Activated T-helper 1 cell treated with anti-CD3 and anti-CD28 coated beads, Interleukin-12 subunit alpha, Interleukin-12 subunit beta, Interleukin-2, Interleukin-4 antibody, amounts not matched to agents 30 ng/mL and 10 ng/mL and 1 ng/mL, durations not matched to agents 14 hours and 24 hours and 36 hours (primary cell): ENCODE measurements at regions of chr12 and their contacts with region 1.

Region 1: GRCh38 chr12:50542448-50542847 is 37.7 kb downstream of the DIP2B start:
- DNase-seq: no peak
- H3K4me3 Mint-ChIP-seq: no peak overlapping the region
- H3K27ac Mint-ChIP-seq: peak overlapping the region; percentile 84
- H3K4me1 Mint-ChIP-seq: peaks cover 28% of the 10 kb centered on the region
- H3K27me3 Mint-ChIP-seq: no peaks in the 10 kb centered on the region

Region 2: GRCh38 chr12:50246873-50247612 is 295.4 kb before region 1 on chr12:
- intact Hi-C with region 1: loop called (anchors 10 kb)
- DNase-seq: peak; percentile 2
- H3K4me3 Mint-ChIP-seq: peak overlapping the region; percentile 79
- H3K27ac Mint-ChIP-seq: peak overlapping the region; percentile 90
- H3K4me1 Mint-ChIP-seq: peaks cover 38% of the 10 kb centered on the region
- H3K27me3 Mint-ChIP-seq: peaks cover 1% of the 10 kb centered on the region

Region 3: GRCh38 chr12:50441773-50442172 is 100.7 kb before region 1 on chr12:
- intact Hi-C with region 1: no loop called
- DNase-seq: no peak
- H3K4me3 Mint-ChIP-seq: no peak overlapping the region
- H3K27ac Mint-ChIP-seq: no peak overlapping the region
- H3K4me1 Mint-ChIP-seq: peaks cover 15% of the 10 kb centered on the region
- H3K27me3 Mint-ChIP-seq: no peaks in the 10 kb centered on the region

Region 4: DNA sequence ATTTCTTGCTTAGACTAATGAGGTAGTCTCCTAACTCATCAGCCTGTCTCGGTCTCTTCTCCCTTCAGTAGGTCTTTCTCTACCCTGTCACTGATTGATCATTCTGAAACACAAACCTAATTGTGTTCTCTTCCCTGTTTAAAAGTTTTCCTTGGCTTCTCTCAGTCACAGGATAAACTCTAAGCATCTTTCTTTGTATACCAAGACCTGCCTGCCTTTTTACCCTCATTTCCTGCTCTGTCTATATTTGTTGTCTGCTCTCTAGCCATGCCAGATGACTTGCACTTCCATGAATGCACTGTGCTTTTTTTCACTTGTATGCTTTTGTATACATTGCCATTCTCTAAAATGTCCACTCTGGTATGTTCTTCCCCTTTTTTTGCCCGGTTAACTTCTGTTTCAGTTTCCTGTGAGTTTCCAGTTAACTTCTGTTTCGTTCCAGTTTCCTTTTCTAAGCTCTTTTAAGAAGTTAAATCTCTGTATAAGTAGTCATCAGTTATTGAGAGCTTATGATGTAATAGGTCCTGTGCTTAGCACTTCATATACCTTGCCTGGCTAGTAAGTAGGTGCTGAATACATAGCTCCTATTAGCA is 24.9 kb before region 1 on chr12:
- intact Hi-C with region 1: loop called (anchors 1 kb)
- DNase-seq: no peak
- H3K4me3 Mint-ChIP-seq: no peak overlapping the region
- H3K27ac Mint-ChIP-seq: no peak overlapping the region
- H3K4me1 Mint-ChIP-seq: peaks cover 31% of the 10 kb centered on the region
- H3K27me3 Mint-ChIP-seq: no peaks in the 10 kb centered on the region

Region 5: DNA sequence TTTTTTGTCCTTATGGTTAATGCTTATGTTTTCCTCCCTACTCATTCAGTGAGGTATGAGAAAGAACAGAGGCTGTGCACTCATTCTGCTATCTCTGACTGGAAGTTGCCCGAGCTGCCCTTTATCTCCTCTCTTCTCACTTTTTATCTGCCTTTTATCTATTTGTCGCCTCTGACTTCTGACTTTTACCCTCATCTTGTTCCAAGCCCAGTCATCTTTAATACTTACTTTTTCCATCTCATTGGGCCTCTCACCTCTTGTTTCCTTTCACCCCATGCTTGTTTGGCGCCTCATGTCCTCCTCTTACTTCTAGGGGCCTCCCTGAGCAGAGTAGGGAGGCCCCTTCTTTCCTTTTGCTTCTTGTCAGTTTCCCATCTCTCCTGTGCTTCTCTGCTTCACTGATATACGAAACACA is 13.0 kb after region 1 on chr12:
- intact Hi-C with region 1: loop called (anchors 1 kb)
- DNase-seq: no peak
- H3K4me3 Mint-ChIP-seq: peak overlapping the region; percentile 48
- H3K27ac Mint-ChIP-seq: peak overlapping the region; percentile 91
- H3K4me1 Mint-ChIP-seq: peaks cover 33% of the 10 kb centered on the region
- H3K27me3 Mint-ChIP-seq: no peaks in the 10 kb centered on the region

Region 6: GRCh38 chr12:50620109-50620977 is 77.9 kb after region 1 on chr12:
- intact Hi-C with region 1: loop called (anchors 1 kb)
- DNase-seq: no peak
- H3K4me3 Mint-ChIP-seq: no peak overlapping the region
- H3K27ac Mint-ChIP-seq: no peak overlapping the region
- H3K4me1 Mint-ChIP-seq: peaks cover 32% of the 10 kb centered on the region
- H3K27me3 Mint-ChIP-seq: no peaks in the 10 kb centered on the region